ENCODE measurements at regions of chr22 and their contacts with region 1.

Region 1: DNA sequence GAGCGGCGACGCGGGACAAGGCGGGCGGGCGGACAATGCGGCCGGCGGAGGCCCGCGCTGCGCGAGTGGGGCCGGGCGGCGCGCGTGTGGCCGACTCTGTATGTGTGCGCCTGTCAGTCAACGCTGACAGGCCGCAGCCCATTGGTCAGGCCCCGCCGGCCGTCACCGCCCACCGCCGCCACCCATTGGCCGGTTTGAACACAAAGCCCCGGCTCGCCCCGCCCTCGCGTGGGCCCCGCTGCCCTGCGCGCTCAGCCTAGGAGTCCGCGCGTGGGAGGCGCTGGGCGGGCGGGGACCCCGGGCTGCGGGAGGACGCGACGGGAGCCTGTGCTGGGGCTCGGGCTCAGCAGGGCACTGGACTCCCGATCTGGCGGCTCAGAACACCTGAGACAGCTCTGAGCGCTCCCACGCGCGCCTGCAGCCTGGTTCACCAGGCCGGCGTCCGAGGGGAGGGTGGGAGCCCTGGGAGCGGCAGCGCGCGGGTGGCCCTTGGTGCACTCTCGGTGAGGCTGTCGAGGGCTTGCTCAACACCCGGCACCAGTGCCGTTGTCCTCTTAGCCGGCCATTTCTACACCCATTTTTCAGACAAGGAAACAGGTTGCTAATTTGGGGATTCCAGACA is at the start of gene SUN2:
- DNase-seq: peak; percentile 86 to 97
- H3K4me3 ChIP-seq: peak within 1 kb of the TSS; percentile 72 to 79
- H3K27ac ChIP-seq: peak within 1 kb of the TSS; percentile 91 to 98
- H3K4me1 ChIP-seq: peaks cover 17 to 23% of the 10 kb centered on the region in 2 donors
- H3K27me3 ChIP-seq: no peaks in the 10 kb centered on the region
- CTCF ChIP-seq: no peak
- total RNA-seq, gene SUN2: 896 TPM

Region 2: GRCh38 chr22:37807410-37808293 is 948.4 kb before region 1 on chr22 and contains the start of gene GCAT:
- intact Hi-C with region 1: loop called (anchors 2 kb)
- DNase-seq: peak; percentile 80 to 98
- H3K4me3 ChIP-seq: peak within 1 kb of the TSS; percentile 67 to 72
- H3K27ac ChIP-seq: peak within 1 kb of the TSS; percentile 83 to 89
- H3K4me1 ChIP-seq: peaks cover 6 to 17% of the 10 kb centered on the region in 2 donors
- H3K27me3 ChIP-seq: no peaks in the 10 kb centered on the region
- CTCF ChIP-seq: no peak
- total RNA-seq, gene GCAT: 4.5 TPM

Region 3: DNA sequence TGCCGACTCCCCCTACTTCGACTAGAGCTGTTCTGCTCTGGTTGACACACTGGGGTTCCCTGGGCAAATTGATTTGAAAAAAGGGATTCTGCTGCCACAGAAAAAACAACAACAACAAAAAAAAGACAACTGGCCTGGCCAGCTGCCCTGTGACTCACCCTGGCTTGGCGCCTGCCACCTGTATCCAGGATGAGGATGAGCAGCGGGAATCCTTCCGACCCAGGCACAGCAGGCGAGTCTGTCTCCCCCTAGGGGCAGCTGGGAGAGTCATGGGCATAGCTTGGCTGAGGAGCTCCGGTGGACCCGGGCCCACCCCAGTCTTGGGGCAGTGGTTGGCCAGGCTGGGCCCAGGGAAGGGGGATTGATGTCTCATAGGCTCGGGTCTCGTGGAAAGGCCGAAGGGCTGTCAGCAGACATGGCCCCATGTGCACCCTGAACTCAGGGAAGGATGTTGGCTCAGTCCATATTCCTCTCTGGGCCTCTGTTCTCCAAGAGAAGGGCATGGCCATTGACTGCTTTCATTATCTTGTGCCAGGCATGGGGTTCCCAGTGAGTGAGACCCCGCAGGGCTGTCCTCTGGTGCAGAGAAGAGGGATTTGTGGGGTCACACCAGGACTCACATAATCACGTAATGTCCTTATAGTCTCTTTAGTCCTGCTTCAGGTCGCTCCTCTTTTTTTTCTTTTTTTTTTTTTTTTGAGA is 10.2 kb after region 1 on chr22:
- intact Hi-C with region 1: no loop called
- DNase-seq: no peak
- H3K4me3 ChIP-seq: no peak overlapping the region
- H3K27ac ChIP-seq: no peak overlapping the region
- H3K4me1 ChIP-seq: peaks cover 0 to 6% of the 10 kb centered on the region in 2 donors
- H3K27me3 ChIP-seq: no peaks in the 10 kb centered on the region
- CTCF ChIP-seq: peak; percentile 28 to 62 (median 52)

Region 4: GRCh38 chr22:38820020-38820419 is 64.0 kb after region 1 on chr22:
- intact Hi-C with region 1: no loop called
- DNase-seq: no peak
- H3K4me3 ChIP-seq: no peak overlapping the region
- H3K27ac ChIP-seq: no peak overlapping the region
- H3K4me1 ChIP-seq: no peaks in the 10 kb centered on the region
- H3K27me3 ChIP-seq: no peaks in the 10 kb centered on the region
- CTCF ChIP-seq: no peak

Region 5: DNA sequence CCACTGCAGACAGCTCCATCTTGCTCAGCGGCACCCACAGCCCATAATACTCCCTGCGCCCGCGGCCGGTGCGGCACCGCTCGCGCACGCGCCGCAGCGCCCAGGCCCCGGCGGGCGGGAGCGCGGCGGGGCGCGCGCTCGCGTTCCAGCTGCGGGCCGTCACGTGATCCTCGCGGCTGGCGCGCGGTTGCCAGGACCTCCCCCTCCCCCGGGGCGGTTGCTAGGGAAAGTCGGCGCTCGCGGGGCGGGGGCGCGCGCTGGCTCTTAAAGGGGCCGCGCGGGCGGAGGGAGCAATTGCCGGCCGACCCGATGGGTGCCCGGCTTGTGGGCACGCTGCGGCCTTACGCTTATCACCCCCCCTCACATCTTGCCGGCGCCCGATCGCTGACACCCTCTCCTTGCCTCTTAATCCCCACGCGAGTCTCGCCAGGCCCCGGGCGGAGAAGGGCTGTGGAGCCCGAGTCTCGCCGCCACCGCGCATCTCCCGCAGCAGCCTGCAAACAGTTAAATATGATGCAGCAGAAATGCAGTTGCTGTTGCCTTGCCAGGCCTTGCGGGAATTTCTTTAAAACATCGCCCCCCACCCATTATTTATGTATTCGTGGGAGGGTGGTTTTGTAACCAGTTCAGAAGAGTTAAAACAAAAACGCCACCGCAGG is 116.3 kb after region 1 on chr22 and contains the start of gene CBX6:
- intact Hi-C with region 1: no loop called
- DNase-seq: peak; percentile 73 to 97
- H3K4me3 ChIP-seq: peak within 1 kb of the TSS; percentile 70 to 87
- H3K27ac ChIP-seq: peak within 1 kb of the TSS; percentile 88 to 96
- H3K4me1 ChIP-seq: peaks cover 8 to 28% of the 10 kb centered on the region in 2 donors
- H3K27me3 ChIP-seq: no peaks in the 10 kb centered on the region
- CTCF ChIP-seq: no peak
- total RNA-seq, gene CBX6: 159 TPM

Region 6: DNA sequence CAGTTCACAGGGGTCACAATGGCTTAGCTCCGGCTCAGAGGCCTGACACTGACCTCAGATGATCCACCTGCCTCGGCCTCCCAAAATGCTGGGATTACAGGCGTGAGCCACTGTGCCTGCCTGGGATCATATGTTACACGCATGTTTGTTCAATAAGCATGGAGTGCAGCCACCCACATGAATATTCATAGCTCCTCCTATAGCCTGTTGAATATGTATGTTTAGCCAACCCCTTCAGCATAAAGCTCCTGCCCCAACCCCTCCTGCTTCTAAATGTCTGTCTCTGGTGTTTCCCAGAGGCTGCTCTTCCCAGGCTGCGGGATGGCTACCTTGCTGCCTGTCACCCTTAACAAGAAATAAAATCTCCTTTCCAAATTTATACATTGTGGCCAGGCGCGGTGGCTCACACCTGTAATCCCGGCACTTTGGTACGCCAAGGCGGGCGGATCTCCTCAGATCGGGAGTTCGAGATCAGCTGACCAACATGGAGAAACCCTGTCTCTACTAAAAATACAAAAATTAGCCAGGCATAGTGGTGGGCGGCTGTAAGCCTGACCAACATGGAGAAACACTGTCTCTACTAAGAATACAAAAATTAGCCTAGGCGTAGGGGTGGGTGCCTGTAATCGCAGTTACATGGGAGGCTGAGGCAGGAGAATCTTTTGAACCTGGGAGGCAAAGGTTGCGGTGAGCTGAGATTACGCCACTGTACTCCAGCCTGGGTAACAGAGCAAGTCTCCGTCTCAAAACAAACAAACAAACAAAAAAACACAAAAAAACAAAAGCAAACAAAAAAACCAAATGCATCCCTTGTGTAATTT is 283.5 kb after region 1 on chr22:
- intact Hi-C with region 1: no loop called
- DNase-seq: no peak
- H3K4me3 ChIP-seq: no peak overlapping the region
- H3K27ac ChIP-seq: peak overlapping the region; percentile 68 to 73
- H3K4me1 ChIP-seq: peaks cover 0 to 10% of the 10 kb centered on the region in 2 donors
- H3K27me3 ChIP-seq: no peaks in the 10 kb centered on the region
- CTCF ChIP-seq: no peak

Measured in ascending aorta (tissue), 2 donors.